ENCODE measurements at regions of chr5 and their contacts with region 1.

Region 1: GRCh38 chr5:42858031-42858643 is 46.4 kb upstream of the SELENOP start:
- DNase-seq: peak in 1 of 2 donors; percentile 44
- H3K4me3 ChIP-seq: no peak overlapping the region
- CTCF ChIP-seq: no peak
- POLR2A ChIP-seq: no peak

Region 2: GRCh38 chr5:42830924-42831323 is 27.2 kb before region 1 on chr5:
- intact Hi-C with region 1: loop called (anchors 2 kb)
- DNase-seq: no peak
- H3K4me3 ChIP-seq: no peak overlapping the region
- CTCF ChIP-seq: no peak
- POLR2A ChIP-seq: no peak

Region 3: DNA sequence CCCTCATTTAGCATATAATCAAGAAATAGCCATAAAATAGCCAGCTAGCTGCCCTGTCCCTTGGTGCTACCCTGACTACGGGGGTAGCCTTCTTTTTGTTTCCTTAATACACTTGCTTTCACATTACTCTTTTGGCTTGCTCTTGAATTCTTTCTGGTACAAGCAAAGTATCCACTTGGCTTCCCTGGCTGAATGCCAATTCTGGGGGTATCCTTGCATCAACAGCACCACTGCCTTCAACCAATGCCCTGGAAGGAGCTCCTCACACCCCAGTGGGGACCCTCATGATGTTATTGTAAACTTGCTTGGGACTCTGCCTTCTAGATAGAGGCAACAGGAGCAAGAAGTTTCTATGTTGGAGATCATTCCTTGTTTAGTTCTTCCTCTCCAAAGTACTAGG is 46.8 kb after region 1 on chr5:
- intact Hi-C with region 1: no loop called
- DNase-seq: no peak
- H3K4me3 ChIP-seq: no peak overlapping the region
- CTCF ChIP-seq: no peak
- POLR2A ChIP-seq: no peak

Region 4: GRCh38 chr5:44321144-44321725 is 1463.1 kb after region 1 on chr5:
- intact Hi-C with region 1: loop called (anchors 5 kb)
- DNase-seq: no peak
- H3K4me3 ChIP-seq: no peak overlapping the region
- CTCF ChIP-seq: no peak
- POLR2A ChIP-seq: no peak

Measured in lower leg skin (tissue), 4 donors.